ENCODE measurements at regions of chr17 and their contacts with region 1.

Region 1: GRCh38 chr17:66567234-66568170 is 265.1 kb downstream of the PRKCA start:
- DNase-seq: peak; percentile 64
- ATAC-seq: peak; percentile 51
- H3K4me3 ChIP-seq: no peak overlapping the region
- H3K4me3 Mint-ChIP-seq: no peak overlapping the region
- H3K27ac ChIP-seq: no peak overlapping the region
- H3K27ac Mint-ChIP-seq: no peak overlapping the region
- H3K4me1 ChIP-seq: no peaks in the 10 kb centered on the region
- H3K4me1 Mint-ChIP-seq: no peaks in the 10 kb centered on the region
- H3K27me3 ChIP-seq: no peaks in the 10 kb centered on the region
- H3K27me3 Mint-ChIP-seq: no peaks in the 10 kb centered on the region
- CTCF ChIP-seq: peak; percentile 76

Region 2: GRCh38 chr17:65294179-65294720 is 1273.3 kb before region 1 on chr17:
- CTCF ChIA-PET with region 1: no interaction called
- POLR2A ChIA-PET with region 1: no interaction called
- intact Hi-C with region 1: loop called (anchors 5 kb)
- DNase-seq: peak; percentile 36
- ATAC-seq: peak; percentile 33
- H3K4me3 ChIP-seq: no peak overlapping the region
- H3K4me3 Mint-ChIP-seq: no peak overlapping the region
- H3K27ac ChIP-seq: no peak overlapping the region
- H3K27ac Mint-ChIP-seq: no peak overlapping the region
- H3K4me1 ChIP-seq: no peaks in the 10 kb centered on the region
- H3K4me1 Mint-ChIP-seq: no peaks in the 10 kb centered on the region
- H3K27me3 ChIP-seq: no peaks in the 10 kb centered on the region
- H3K27me3 Mint-ChIP-seq: peaks cover 12% of the 10 kb centered on the region
- CTCF ChIP-seq: peak; percentile 49

Region 3: GRCh38 chr17:66255112-66255511 is 312.4 kb before region 1 on chr17:
- CTCF ChIA-PET with region 1: interaction called, 10 read pairs
- POLR2A ChIA-PET with region 1: no interaction called
- intact Hi-C with region 1: no loop called
- DNase-seq: peak; percentile 51
- ATAC-seq: no peak
- H3K4me3 ChIP-seq: no peak overlapping the region
- H3K4me3 Mint-ChIP-seq: no peak overlapping the region
- H3K27ac ChIP-seq: no peak overlapping the region
- H3K27ac Mint-ChIP-seq: no peak overlapping the region
- H3K4me1 ChIP-seq: no peaks in the 10 kb centered on the region
- H3K4me1 Mint-ChIP-seq: peaks cover 2% of the 10 kb centered on the region
- H3K27me3 ChIP-seq: no peaks in the 10 kb centered on the region
- H3K27me3 Mint-ChIP-seq: no peaks in the 10 kb centered on the region
- CTCF ChIP-seq: peak; percentile 68